Lower lobe of right lung (tissue), 2 donors: ENCODE measurements at regions of chr15 and their contacts with region 1.

Region 1: GRCh38 chr15:74635228-74635627 is 19.6 kb downstream of the CLK3 start:
- DNase-seq: peak; percentile 72
- ATAC-seq: peak; percentile 80 to 81
- H3K4me3 ChIP-seq: no peak overlapping the region
- H3K27ac ChIP-seq: no peak overlapping the region
- H3K4me1 ChIP-seq: no peaks in the 10 kb centered on the region
- H3K27me3 ChIP-seq: no peaks in the 10 kb centered on the region
- CTCF ChIP-seq: peak; percentile 88

Region 2: GRCh38 chr15:74768771-74769342 is 133.6 kb after region 1 on chr15:
- intact Hi-C with region 1: loop called (anchors 5 kb)
- DNase-seq: peak; percentile 75
- ATAC-seq: peak; percentile 75 to 77
- H3K4me3 ChIP-seq: no peak overlapping the region
- H3K27ac ChIP-seq: no peak overlapping the region
- H3K4me1 ChIP-seq: peaks cover 14% of the 10 kb centered on the region
- H3K27me3 ChIP-seq: peaks cover 3% of the 10 kb centered on the region
- CTCF ChIP-seq: peak; percentile 72

Region 3: DNA sequence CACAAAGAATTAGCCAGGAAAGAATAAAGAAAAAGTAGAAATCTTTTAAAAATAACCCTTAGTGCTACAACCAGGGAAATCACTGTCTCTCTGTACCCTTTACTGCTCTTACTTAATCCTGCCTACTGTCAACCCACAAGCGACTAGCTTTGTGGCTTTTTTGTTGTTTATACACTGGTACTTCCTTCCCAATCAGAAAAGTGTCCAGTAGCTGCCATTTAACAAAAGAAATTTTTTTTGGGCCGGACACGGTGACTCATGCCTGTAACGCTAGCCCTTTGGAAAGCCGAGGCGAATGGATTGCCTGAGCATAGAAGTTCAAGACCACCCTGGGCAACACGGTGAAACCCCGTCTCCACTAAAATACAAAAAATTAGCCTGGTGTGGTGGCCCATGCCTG is 285.2 kb after region 1 on chr15:
- intact Hi-C with region 1: no loop called
- DNase-seq: no peak
- ATAC-seq: no peak
- H3K4me3 ChIP-seq: no peak overlapping the region
- H3K27ac ChIP-seq: no peak overlapping the region
- H3K4me1 ChIP-seq: no peaks in the 10 kb centered on the region
- H3K27me3 ChIP-seq: no peaks in the 10 kb centered on the region
- CTCF ChIP-seq: no peak